Breast epithelium (tissue), 4 donors: ENCODE measurements at regions of chrX and their contacts with region 1.

Region 1: GRCh38 chrX:50088645-50089044 is 112.2 kb downstream of the AKAP4 start:
- DNase-seq: no peak
- H3K4me3 ChIP-seq: no peak overlapping the region
- H3K27ac ChIP-seq: no peak overlapping the region
- H3K4me1 ChIP-seq: no peaks in the 10 kb centered on the region
- H3K27me3 ChIP-seq: peaks cover 0 to 43% of the 10 kb centered on the region in 2 donors
- CTCF ChIP-seq: no peak
- POLR2A ChIP-seq: no peak

Region 2: GRCh38 chrX:49111791-49112190 is 976.9 kb before region 1 on chrX:
- intact Hi-C with region 1: loop called (anchors 5 kb)
- DNase-seq: peak in 1 of 2 donors; percentile 26
- H3K4me3 ChIP-seq: no peak overlapping the region
- H3K27ac ChIP-seq: peak overlapping the region; percentile 40 to 62
- H3K4me1 ChIP-seq: no peaks in the 10 kb centered on the region
- H3K27me3 ChIP-seq: peaks cover 0 to 18% of the 10 kb centered on the region in 2 donors
- CTCF ChIP-seq: no peak
- POLR2A ChIP-seq: no peak

Region 3: DNA sequence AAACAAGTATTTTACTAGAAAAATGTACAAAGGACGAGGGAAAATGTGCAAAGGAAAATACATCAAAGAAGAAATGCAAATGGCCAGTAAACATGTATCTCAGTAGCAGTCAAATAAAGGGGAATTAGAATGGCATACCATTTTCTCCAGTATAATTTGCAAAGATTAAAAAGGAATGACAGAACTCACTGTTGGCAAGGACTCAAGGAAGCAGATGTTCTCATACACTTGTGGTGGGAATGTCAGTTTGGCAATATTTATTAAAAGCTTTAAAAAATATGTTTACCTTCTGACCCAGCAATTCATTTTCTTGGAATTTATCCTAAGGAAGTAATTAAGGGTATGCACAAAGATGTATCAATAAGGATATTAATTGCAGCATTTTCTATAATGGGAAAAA is 158.6 kb before region 1 on chrX:
- intact Hi-C with region 1: no loop called
- DNase-seq: no peak
- H3K4me3 ChIP-seq: no peak overlapping the region
- H3K27ac ChIP-seq: no peak overlapping the region
- H3K4me1 ChIP-seq: no peaks in the 10 kb centered on the region
- H3K27me3 ChIP-seq: peaks cover 0 to 29% of the 10 kb centered on the region in 2 donors
- CTCF ChIP-seq: no peak
- POLR2A ChIP-seq: no peak

Region 4: GRCh38 chrX:50067435-50068284 is 21.0 kb before region 1 on chrX:
- intact Hi-C with region 1: no loop called
- DNase-seq: no peak
- H3K4me3 ChIP-seq: no peak overlapping the region
- H3K27ac ChIP-seq: no peak overlapping the region
- H3K4me1 ChIP-seq: no peaks in the 10 kb centered on the region
- H3K27me3 ChIP-seq: peaks cover 0 to 25% of the 10 kb centered on the region in 2 donors
- CTCF ChIP-seq: no peak
- POLR2A ChIP-seq: no peak